Left ventricle myocardium superior (tissue), 1 donor: ENCODE measurements at regions of chr2 and their contacts with region 1.

Region 1: DNA sequence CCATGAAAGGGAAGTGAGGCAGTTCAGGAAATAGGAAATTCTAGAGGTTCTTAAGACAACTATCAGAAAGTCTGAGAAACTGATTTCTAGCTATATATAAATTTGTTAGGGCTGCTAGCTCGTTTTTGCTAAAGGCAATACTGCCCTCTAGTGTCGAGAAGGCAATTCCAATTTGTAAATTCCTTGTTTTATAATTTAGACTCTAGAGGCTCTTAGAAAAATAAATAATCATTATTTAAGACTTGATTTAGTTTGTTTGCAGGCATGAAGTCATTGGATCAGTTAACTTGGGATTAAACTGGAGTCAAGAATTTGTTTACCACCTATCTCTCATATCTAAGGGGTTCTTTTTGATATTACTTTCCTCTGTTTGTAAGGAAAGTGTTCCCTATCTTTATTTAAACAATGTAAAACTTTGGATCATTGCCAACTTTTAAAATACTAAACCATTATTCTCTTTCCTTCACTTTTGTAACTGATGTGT is 66.2 kb downstream of the ACVR2A start:
- DNase-seq: no peak
- ATAC-seq: peak; percentile 30

Region 2: DNA sequence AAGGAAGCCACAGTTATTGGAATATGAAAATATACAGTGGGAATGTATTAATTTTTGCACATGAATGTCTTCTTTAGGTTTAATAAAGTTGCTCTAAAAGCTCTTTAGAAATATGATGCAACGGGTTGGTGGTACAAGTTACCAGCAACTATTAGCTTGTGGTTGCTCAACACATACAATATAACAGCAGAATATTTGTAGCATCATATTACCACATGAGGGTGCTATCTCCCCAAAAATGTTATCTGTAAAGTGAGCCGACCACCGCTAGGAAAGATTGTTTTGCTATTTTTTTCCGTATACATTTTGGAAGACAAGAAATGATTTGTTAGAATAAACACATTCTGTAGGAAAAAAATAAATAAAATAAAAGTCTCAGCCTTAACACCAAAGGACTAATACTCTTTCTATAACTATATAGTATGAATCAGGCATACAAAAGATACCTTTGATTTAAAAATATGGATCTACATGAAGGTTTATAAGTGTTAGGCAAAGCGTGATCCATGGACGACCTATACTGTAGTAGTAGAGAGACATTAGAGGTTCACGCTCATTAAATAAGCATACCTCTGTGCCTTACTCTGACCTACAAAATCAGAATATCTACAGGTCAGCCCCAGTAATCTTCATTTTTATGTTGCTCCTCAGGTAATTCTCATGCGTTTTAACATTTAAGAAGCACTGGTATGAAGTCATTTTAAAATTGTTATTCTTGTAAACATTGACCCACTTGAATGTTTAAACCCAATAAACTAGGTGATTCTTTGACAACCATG is 1176.8 kb before region 1 on chr2:
- intact Hi-C with region 1: loop called (anchors 10 kb)
- DNase-seq: no peak
- ATAC-seq: no peak

Region 3: DNA sequence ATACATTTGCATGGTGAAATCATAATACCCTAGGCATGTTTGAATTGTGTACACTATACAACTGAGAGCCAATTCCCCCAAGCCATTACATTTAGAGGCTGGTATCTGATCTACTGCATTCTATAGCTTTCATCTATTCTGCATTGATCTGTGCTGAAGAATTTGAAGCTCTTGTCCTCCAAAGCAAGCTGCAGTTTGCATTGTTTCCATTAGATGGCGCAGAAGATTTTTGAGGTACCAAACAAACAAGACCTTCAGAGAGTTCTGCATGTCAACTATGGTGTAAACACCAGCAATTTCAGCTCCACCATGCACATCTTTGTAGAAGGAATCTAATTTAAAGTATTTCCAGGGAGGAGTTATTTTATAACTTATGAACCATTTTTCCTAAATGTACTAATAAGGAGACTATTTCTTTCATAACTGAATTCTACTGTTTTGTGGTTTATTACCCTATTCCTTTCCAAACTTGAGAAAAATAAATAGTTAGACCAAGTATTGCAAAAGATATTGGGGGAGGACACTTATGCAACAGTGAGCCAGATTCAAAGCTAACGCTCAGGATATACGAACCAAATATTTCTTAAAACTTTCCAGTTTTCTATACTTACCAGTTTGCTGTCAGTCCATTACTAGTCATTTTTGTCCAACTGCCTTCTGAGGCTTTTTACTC is 828.0 kb before region 1 on chr2:
- intact Hi-C with region 1: loop called (anchors 2 kb)
- DNase-seq: no peak
- ATAC-seq: peak; percentile 45

Region 4: DNA sequence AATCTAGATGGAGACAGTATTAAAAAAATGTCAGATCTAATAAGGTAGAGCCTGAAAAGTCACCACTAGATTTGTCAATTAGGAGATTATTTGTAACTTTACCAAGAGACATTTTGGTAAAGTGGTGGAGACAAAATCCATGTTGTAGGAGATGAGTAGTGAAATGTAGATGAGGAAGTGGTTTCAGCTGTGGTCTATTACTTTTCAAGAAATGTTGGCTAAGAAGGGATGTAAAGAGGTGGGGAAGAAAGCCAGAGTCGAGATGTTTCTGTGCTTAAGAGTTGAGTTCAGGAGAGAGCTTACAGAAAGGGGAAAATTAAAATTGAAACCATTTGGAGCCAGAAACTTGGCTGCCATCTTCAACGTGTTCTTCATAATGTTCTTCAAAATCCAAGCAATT is 44.0 kb before region 1 on chr2:
- intact Hi-C with region 1: no loop called
- DNase-seq: no peak
- ATAC-seq: no peak

Region 5: DNA sequence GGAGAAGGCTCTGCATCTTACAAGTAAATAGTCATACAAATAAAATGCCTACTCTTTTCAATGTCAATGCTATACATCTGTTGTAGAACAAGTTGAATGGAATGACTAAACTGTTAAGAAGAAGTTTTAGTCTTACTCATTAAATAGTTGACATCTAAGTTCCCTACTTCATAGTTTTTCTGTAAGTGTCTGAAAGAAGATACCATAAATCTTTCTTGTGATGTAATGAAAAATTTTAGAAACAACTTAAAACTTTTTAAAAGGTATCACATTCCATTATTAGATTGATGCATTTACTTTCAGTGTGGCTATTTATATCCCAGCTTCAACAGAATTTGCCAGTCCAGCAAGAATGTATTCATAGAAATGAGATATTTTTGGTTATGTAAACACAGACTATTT is 548.3 kb after region 1 on chr2:
- intact Hi-C with region 1: no loop called
- DNase-seq: no peak
- ATAC-seq: no peak